ENCODE measurements at regions of chr21 and their contacts with region 1.

Region 1: GRCh38 chr21:18936549-18936948 is 533.0 kb upstream of the TMPRSS15 start:
- DNase-seq: no peak
- ATAC-seq: no peak
- H3K4me3 ChIP-seq: no peak overlapping the region
- H3K27ac ChIP-seq: no peak overlapping the region
- H3K4me1 ChIP-seq: no peaks in the 10 kb centered on the region
- H3K27me3 ChIP-seq: no peaks in the 10 kb centered on the region
- CTCF ChIP-seq: no peak
- EP300 ChIP-seq: no peak
- POLR2A ChIP-seq: no peak
- RAD21 ChIP-seq: no peak

Region 2: DNA sequence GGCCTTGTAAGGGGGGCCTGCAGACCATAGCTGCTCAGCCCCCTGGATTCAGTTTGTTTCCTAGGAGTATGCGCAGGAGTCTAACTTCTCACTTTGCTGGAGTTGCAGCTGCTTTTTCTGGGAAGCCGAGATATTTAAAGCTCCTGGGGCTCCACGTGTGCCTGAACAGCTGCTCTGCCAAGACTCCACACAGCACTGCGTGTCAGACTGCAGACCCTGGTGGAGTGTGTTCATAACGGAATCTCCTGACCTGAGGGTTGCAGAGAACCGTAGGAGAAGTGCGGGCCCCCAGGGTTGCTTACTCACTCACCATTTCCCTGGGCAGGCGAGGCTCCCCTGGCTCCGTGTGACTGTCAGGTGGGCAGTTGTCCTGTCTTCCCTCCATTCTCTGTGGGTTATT is 58.6 kb before region 1 on chr21:
- CTCF ChIA-PET with region 1: no interaction called
- POLR2A ChIA-PET with region 1: no interaction called
- RAD21 ChIA-PET with region 1: no interaction called
- SMC1A ChIA-PET with region 1: no interaction called
- in situ Hi-C with region 1: no loop called
- intact Hi-C with region 1: loop called (anchors 10 kb)
- DNase-seq: no peak
- ATAC-seq: no peak
- H3K4me3 ChIP-seq: no peak overlapping the region
- H3K27ac ChIP-seq: no peak overlapping the region
- H3K4me1 ChIP-seq: no peaks in the 10 kb centered on the region
- H3K27me3 ChIP-seq: no peaks in the 10 kb centered on the region
- CTCF ChIP-seq: no peak
- EP300 ChIP-seq: no peak
- POLR2A ChIP-seq: no peak
- RAD21 ChIP-seq: no peak

Region 3: GRCh38 chr21:18950045-18950740 is 13.6 kb after region 1 on chr21:
- CTCF ChIA-PET with region 1: no interaction called
- POLR2A ChIA-PET with region 1: no interaction called
- RAD21 ChIA-PET with region 1: no interaction called
- SMC1A ChIA-PET with region 1: interaction called, 10 read pairs
- in situ Hi-C with region 1: no loop called
- intact Hi-C with region 1: no loop called
- DNase-seq: no peak
- ATAC-seq: no peak
- H3K4me3 ChIP-seq: no peak overlapping the region
- H3K27ac ChIP-seq: no peak overlapping the region
- H3K4me1 ChIP-seq: no peaks in the 10 kb centered on the region
- H3K27me3 ChIP-seq: no peaks in the 10 kb centered on the region
- CTCF ChIP-seq: no peak
- EP300 ChIP-seq: no peak
- POLR2A ChIP-seq: no peak
- RAD21 ChIP-seq: no peak

Region 4: GRCh38 chr21:18970941-18971340 is 34.4 kb after region 1 on chr21:
- CTCF ChIA-PET with region 1: no interaction called
- POLR2A ChIA-PET with region 1: no interaction called
- RAD21 ChIA-PET with region 1: no interaction called
- SMC1A ChIA-PET with region 1: no interaction called
- in situ Hi-C with region 1: no loop called
- intact Hi-C with region 1: no loop called
- DNase-seq: no peak
- ATAC-seq: no peak
- H3K4me3 ChIP-seq: no peak overlapping the region
- H3K27ac ChIP-seq: no peak overlapping the region
- H3K4me1 ChIP-seq: no peaks in the 10 kb centered on the region
- H3K27me3 ChIP-seq: no peaks in the 10 kb centered on the region
- CTCF ChIP-seq: no peak
- EP300 ChIP-seq: no peak
- POLR2A ChIP-seq: no peak
- RAD21 ChIP-seq: no peak

Region 5: DNA sequence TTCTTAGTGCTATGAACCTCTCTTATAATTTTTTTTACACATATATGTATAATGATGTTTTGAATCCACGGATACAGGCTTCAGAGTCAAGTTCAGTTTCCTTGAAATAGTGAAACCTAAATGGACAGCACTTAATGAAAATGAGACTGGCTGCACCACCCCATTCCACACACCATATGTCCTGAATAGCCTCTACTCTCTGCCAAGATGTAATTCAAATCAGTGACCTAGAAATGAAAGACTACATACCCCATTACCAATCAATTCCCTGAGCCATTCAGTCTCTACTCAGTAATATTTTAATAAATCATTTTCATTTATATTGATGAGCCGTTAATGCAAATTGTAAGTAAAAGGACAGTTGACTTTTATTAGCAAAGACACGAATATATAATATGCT is 82.0 kb after region 1 on chr21:
- CTCF ChIA-PET with region 1: no interaction called
- POLR2A ChIA-PET with region 1: no interaction called
- RAD21 ChIA-PET with region 1: no interaction called
- SMC1A ChIA-PET with region 1: no interaction called
- in situ Hi-C with region 1: no loop called
- intact Hi-C with region 1: no loop called
- DNase-seq: no peak
- ATAC-seq: no peak
- H3K4me3 ChIP-seq: no peak overlapping the region
- H3K27ac ChIP-seq: no peak overlapping the region
- H3K4me1 ChIP-seq: no peaks in the 10 kb centered on the region
- H3K27me3 ChIP-seq: no peaks in the 10 kb centered on the region
- CTCF ChIP-seq: no peak
- EP300 ChIP-seq: no peak
- POLR2A ChIP-seq: no peak
- RAD21 ChIP-seq: no peak

Measured in GM12878 (cell line).